PC-9 (cell line): ENCODE measurements at regions of chr14 and their contacts with region 1.

Region 1: DNA sequence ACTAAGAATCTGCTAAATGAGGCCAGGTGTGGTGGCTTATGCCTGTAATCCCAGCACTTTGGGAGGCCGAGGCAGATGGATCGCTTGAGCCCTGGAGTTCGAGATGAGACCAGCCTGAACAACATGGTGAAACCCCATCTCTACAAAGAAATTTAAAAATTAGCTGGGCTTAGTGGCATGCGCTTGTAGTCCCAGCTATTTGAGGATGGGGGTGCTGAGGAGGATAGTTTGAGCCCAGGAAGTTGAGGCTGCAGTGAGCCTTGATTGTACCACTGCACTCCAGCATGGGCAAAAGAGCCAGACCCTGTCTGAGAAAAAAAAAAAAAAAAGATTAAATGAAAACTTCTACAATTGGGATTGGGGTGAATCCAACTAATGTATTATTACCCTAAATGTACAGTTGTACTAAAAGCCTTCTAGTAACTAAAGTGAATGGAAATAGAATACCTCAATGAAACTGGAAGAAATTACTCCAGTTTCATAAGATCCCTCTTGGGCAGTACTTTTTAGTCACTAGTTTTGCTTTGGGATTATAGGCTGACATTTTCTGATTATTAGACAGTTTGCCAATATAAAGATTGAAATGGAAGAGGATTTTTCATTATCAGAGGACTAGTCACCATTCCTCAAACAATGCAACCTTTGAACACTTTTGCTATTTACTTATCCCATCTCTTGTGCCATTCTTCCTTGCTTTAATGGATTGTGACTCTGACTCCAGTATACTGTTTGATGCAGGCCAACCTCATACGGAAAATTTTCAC is 14.3 kb downstream of the COCH start:
- DNase-seq: no peak
- H3K4me3 ChIP-seq: no peak overlapping the region
- H3K27ac ChIP-seq: no peak overlapping the region
- H3K4me1 ChIP-seq: no peaks in the 10 kb centered on the region
- H3K27me3 ChIP-seq: no peaks in the 10 kb centered on the region
- CTCF ChIP-seq: no peak

Region 2: DNA sequence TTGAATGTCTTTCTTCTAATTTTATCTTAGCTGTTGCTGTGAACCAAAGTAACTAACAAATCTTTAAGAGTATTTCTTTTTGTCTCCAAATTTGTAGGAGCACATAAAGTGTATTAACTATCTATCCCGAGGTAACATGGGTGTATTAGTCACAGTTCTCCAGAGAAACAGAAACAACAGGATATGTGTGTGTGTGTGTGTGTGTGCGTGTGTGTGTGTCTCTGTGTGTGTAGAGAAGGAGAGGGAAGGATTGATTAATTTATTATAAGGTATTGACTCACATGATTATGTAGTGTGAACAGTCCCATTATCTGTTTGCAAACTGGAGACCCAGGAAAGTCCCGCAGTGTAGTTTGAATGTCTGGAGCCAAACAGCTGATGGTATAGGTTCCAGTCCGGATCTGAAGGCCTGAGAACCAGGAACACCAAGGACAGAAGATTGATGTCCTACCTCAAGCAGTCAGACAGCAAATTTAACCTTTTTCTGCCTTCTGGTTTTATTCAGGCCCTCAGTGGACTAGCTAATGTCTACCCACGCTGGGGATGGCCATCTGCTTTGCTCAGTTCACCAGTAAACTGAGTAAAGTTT is 315.3 kb before region 1 on chr14:
- CTCF ChIA-PET with region 1: no interaction called
- POLR2A ChIA-PET with region 1: no interaction called
- intact Hi-C with region 1: no loop called
- DNase-seq: no peak
- H3K4me3 ChIP-seq: no peak overlapping the region
- H3K27ac ChIP-seq: no peak overlapping the region
- H3K4me1 ChIP-seq: no peaks in the 10 kb centered on the region
- H3K27me3 ChIP-seq: no peaks in the 10 kb centered on the region
- CTCF ChIP-seq: no peak

Region 3: DNA sequence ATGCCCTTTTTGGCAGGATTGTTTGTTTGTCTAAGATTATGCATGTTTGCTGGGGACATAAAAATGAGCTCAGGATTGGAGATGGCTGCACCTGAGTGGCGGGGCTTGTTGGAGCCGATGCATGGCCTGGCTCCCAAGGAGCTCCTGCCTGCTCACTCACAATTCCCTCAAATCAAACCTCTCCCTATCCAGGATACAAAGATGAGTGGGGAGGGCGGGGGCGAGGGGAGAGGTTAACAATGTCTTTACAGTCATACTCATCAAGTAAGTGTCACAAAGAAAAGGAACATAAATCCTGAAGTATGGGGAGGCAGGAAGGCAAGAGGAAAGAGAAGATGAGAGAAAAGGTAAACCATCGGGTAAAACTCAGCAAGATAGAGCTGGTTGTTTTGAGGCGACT is 118.3 kb before region 1 on chr14:
- CTCF ChIA-PET with region 1: no interaction called
- POLR2A ChIA-PET with region 1: no interaction called
- intact Hi-C with region 1: no loop called
- DNase-seq: no peak
- H3K4me3 ChIP-seq: no peak overlapping the region
- H3K27ac ChIP-seq: no peak overlapping the region
- H3K4me1 ChIP-seq: no peaks in the 10 kb centered on the region
- H3K27me3 ChIP-seq: no peaks in the 10 kb centered on the region
- CTCF ChIP-seq: no peak

Region 4: GRCh38 chr14:31127690-31128089 is 239.0 kb after region 1 on chr14:
- CTCF ChIA-PET with region 1: no interaction called
- POLR2A ChIA-PET with region 1: no interaction called
- intact Hi-C with region 1: no loop called
- DNase-seq: no peak
- H3K4me3 ChIP-seq: no peak overlapping the region
- H3K27ac ChIP-seq: no peak overlapping the region
- H3K4me1 ChIP-seq: no peaks in the 10 kb centered on the region
- H3K27me3 ChIP-seq: no peaks in the 10 kb centered on the region
- CTCF ChIP-seq: no peak

Region 5: DNA sequence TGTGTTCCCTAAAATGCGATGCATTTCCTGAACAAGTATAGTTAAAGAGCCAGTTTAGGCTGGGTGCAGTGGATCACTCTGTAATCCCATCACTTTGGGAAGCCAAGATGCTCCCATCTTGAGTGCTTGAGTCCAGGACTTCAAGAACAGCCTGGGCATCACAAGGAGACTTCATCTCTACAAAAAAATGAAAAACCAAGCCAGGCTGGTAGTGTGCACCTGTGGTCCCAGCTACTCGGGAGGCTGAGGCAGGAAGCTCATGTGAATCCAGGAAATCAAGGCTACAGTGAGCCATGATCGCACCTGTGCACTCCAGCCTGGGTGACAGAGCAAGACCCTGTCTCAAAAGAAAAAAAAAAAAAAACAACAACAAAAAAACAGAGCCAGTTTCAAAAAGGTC is 292.6 kb after region 1 on chr14:
- CTCF ChIA-PET with region 1: no interaction called
- POLR2A ChIA-PET with region 1: interaction called, 18 read pairs
- intact Hi-C with region 1: no loop called
- DNase-seq: no peak
- H3K4me3 ChIP-seq: no peak overlapping the region
- H3K27ac ChIP-seq: no peak overlapping the region
- H3K4me1 ChIP-seq: no peaks in the 10 kb centered on the region
- H3K27me3 ChIP-seq: no peaks in the 10 kb centered on the region
- CTCF ChIP-seq: no peak